Common myeloid progenitor, CD34-positive (primary cell): ENCODE measurements at regions of chr6 and their contacts with region 1.

Region 1: DNA sequence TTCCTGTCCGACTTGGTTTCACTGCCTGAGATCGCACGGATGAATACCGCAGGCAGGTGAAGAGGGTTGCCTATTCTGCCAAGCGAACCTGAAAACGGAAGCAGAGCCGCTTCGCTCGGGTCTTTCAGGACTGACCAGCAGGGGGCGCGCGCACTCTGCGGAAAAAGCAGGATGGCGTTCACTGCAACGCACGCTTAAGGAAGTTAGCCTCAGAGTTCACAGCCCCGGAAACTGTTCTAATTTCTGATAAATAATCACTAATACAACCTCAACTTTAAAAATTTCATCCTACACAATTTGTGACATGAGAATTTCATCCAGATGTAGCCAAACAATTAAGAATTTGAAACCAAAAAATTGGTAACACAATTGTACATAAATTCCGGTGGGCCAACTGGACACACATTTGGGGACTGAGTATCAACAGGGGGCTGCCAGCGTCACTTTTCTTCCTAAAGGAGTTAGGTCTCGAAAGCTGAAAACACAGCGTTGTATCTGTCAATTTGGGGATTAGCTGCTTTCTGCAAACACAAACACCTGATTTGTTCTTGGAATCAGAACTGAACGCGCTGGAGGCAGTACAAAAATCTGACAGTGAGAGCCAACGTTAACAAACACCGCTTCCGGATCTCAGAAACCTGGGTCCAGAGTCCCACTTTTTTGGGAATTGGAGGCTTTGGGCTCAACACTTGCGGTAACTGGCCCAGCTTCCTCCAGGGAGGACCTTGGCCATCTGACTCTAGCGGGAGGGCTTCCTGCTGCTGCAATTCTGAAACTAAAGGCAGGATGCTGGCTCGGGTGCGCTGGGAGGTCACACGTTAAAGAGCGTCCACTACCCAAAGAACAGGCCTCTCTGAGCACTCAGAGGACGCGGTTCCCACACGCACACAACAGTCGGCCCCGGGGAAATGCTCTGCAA is 8.8 kb downstream of the PXDC1 start:
- DNase-seq: peak; percentile 83 to 90 (median 89)
- H3K4me3 ChIP-seq: peak overlapping the region in 5 of 7 experiments; percentile 1 to 68 (median 46)
- H3K27ac ChIP-seq: no peak overlapping the region
- H3K4me1 ChIP-seq: peaks cover 0 to 34% (median 31%) of the 10 kb centered on the region in 4 experiments
- H3K27me3 ChIP-seq: no peaks in the 10 kb centered on the region

Region 2: GRCh38 chr6:3732345-3733141 is 10.1 kb before region 1 on chr6:
- CTCF ChIA-PET with region 1: interaction called, 19 read pairs
- POLR2A ChIA-PET with region 1: no interaction called
- DNase-seq: peak in 2 of 3 donors; percentile 51 to 55
- H3K4me3 ChIP-seq: no peak overlapping the region
- H3K27ac ChIP-seq: no peak overlapping the region
- H3K4me1 ChIP-seq: peaks cover 0 to 11% (median 6%) of the 10 kb centered on the region in 4 experiments
- H3K27me3 ChIP-seq: no peaks in the 10 kb centered on the region

Region 3: GRCh38 chr6:3887150-3887700 is 144.5 kb after region 1 on chr6:
- CTCF ChIA-PET with region 1: interaction called, 16 read pairs
- POLR2A ChIA-PET with region 1: no interaction called
- DNase-seq: peak; percentile 18 to 45 (median 39)
- H3K4me3 ChIP-seq: no peak overlapping the region
- H3K27ac ChIP-seq: no peak overlapping the region
- H3K4me1 ChIP-seq: no peaks in the 10 kb centered on the region
- H3K27me3 ChIP-seq: no peaks in the 10 kb centered on the region

Region 4: DNA sequence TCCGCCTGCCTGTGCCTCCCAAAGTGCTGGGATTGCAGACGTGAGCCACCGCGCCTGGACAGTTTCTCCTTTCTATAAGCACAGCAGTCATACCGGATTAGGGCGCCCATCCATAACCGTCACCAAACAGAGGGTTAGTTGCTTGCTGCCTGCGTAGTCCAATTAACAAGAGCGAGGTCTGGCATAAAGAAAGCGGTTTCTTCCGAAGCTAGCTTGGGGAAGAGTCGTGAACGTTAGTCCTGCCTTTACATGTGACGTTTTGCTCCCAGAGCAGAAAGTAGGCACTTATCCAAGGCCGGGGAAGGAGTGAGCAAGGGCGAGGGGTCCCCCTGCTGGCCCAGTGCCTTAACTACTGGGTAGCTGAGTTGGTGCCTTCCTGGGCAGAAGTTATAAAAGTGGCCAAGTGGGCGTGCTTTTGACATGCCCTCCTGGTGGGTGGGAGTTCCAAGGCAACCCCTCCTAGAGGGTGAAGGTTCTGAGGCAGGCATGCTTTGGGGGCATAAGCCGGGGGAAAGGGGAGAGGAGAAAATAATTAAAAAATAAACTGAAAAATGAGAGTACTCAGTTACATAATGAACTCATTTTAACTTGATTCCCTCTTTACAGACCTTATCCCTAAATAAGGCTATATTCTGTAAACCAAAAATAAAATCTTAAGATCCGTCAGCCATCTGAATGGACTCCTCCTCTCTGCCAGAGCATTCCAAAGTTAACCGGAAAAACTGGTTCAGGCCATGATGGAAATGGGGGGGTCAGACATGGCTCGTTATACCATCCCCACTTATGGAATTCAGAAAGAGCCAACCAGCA is 248.2 kb after region 1 on chr6:
- CTCF ChIA-PET with region 1: interaction called, 32 read pairs
- POLR2A ChIA-PET with region 1: no interaction called
- DNase-seq: peak; percentile 84 to 88 (median 86)
- H3K4me3 ChIP-seq: peak overlapping the region in 5 of 7 experiments; percentile 6 to 73 (median 49)
- H3K27ac ChIP-seq: no peak overlapping the region
- H3K4me1 ChIP-seq: peaks cover 0 to 6% (median 1%) of the 10 kb centered on the region in 4 experiments
- H3K27me3 ChIP-seq: no peaks in the 10 kb centered on the region

Region 5: GRCh38 chr6:4008324-4009047 is 265.8 kb after region 1 on chr6:
- CTCF ChIA-PET with region 1: interaction called, 30 read pairs
- POLR2A ChIA-PET with region 1: no interaction called
- DNase-seq: peak; percentile 68 to 84 (median 84)
- H3K4me3 ChIP-seq: no peak overlapping the region
- H3K27ac ChIP-seq: no peak overlapping the region
- H3K4me1 ChIP-seq: peaks cover 0 to 11% (median 8%) of the 10 kb centered on the region in 4 experiments
- H3K27me3 ChIP-seq: no peaks in the 10 kb centered on the region